Panc1 (cell line): ENCODE measurements at regions of chr6 and their contacts with region 1.

Region 1: GRCh38 chr6:153183925-153184324 is 52.8 kb upstream of the RGS17 start:
- DNase-seq: no peak
- ATAC-seq: no peak
- H3K4me3 ChIP-seq: no peak overlapping the region
- H3K27ac ChIP-seq: no peak overlapping the region
- H3K4me1 ChIP-seq: no peaks in the 10 kb centered on the region
- H3K27me3 ChIP-seq: no peaks in the 10 kb centered on the region
- CTCF ChIP-seq: no peak

Region 2: GRCh38 chr6:153167061-153167891 is 16.6 kb before region 1 on chr6:
- CTCF ChIA-PET with region 1: no interaction called
- POLR2A ChIA-PET with region 1: no interaction called
- in situ Hi-C with region 1: no loop called
- intact Hi-C with region 1: no loop called
- DNase-seq: peak; percentile 81
- ATAC-seq: peak; percentile 96
- H3K4me3 ChIP-seq: peak overlapping the region in 1 of 2 experiments; percentile 31; a peak in 2 of 4 replicates
- H3K27ac ChIP-seq: peak overlapping the region; percentile 87
- H3K4me1 ChIP-seq: peaks cover 14% of the 10 kb centered on the region
- H3K27me3 ChIP-seq: no peaks in the 10 kb centered on the region
- CTCF ChIP-seq: no peak

Region 3: DNA sequence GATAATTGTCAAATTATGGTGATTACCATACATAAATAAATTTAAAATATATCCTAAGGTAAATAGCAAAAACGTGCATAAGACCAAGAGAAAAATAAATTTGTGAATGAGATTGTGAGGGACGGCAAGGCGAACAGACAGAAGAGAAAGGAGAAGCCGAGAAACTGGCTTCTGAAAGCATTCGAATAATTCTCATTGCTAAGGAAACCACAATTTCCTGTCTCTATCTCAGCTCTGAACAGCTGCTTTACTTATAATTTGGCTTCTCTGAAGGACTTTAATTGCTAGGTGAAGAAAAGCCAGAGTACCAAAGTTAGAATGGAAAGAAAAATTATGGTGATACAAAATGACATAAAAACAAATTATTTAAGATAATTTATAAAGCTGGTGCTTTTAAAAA is 26.2 kb after region 1 on chr6:
- CTCF ChIA-PET with region 1: no interaction called
- POLR2A ChIA-PET with region 1: interaction called, 14 read pairs
- in situ Hi-C with region 1: no loop called
- intact Hi-C with region 1: no loop called
- DNase-seq: no peak
- ATAC-seq: no peak
- H3K4me3 ChIP-seq: no peak overlapping the region
- H3K27ac ChIP-seq: no peak overlapping the region
- H3K4me1 ChIP-seq: no peaks in the 10 kb centered on the region
- H3K27me3 ChIP-seq: no peaks in the 10 kb centered on the region
- CTCF ChIP-seq: no peak